ENCODE measurements at regions of chr11 and their contacts with region 1.

Region 1: DNA sequence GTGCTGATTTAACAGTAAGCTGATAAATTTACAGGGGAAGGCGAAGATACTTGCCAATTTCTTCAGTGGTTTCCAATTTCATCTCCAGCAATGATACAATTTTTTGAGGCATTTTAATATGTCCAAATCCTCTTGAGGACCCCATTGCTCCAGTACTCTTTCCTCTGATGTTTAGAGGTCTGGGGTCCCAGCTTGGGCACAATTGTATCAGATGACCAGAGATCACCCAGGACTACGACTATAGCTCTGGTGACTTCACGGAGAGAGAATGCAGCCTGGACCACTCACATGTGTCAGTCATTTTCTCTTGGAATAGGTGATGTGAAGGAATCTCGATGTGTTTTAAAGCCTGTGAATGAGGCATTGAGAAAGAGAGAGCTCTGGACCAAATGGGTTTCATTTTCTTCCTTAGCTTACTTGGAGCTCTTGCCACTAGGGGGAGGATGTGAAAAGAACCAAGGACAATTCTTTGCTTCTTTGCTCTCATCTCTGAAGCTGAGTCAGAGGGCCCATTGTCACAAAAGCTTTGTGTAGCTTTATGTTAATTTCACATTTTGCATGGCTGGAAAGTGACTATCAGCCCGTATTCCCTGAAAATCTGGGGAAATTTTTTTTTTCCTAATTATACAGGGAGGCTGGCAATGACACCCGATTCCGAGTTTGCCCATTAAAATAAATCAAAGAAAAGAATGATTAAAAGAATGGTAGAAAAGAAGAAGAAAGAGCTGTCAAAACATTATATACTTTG is 6.7 kb upstream of the CCDC90B start:
- DNase-seq: peak; percentile 39
- ATAC-seq: peak; percentile 86
- H3K4me3 ChIP-seq: no peak overlapping the region; a peak in 1 of 4 replicates
- H3K27ac ChIP-seq: no peak overlapping the region
- H3K4me1 ChIP-seq: 0 out of 4 replicates have a peak, but pooled peaks cover 0 to 3% of the 10 kb centered on the region in 2 experiments
- H3K27me3 ChIP-seq: peaks cover 11% of the 10 kb centered on the region
- CTCF ChIP-seq: peak; percentile 36 to 85 (median 75); a peak in 5 of 6 replicates
- POLR2A ChIP-seq: no peak
- RAD21 ChIP-seq: peak; percentile 45; the same call in 1 of the 2 replicates

Region 2: GRCh38 chr11:83306200-83307080 is 13.6 kb after region 1 on chr11:
- CTCF ChIA-PET with region 1: interaction called, 10 read pairs
- POLR2A ChIA-PET with region 1: no interaction called
- RAD21 ChIA-PET with region 1: no interaction called
- intact Hi-C with region 1: no loop called
- DNase-seq: no peak
- ATAC-seq: no peak
- H3K4me3 ChIP-seq: no peak overlapping the region
- H3K27ac ChIP-seq: no peak overlapping the region
- H3K4me1 ChIP-seq: no peaks in the 10 kb centered on the region
- H3K27me3 ChIP-seq: peaks cover 22% of the 10 kb centered on the region
- CTCF ChIP-seq: peak in 1 of 3 experiments; percentile 15; a peak in 1 of 6 replicates
- POLR2A ChIP-seq: no peak
- RAD21 ChIP-seq: no peak

Region 3: DNA sequence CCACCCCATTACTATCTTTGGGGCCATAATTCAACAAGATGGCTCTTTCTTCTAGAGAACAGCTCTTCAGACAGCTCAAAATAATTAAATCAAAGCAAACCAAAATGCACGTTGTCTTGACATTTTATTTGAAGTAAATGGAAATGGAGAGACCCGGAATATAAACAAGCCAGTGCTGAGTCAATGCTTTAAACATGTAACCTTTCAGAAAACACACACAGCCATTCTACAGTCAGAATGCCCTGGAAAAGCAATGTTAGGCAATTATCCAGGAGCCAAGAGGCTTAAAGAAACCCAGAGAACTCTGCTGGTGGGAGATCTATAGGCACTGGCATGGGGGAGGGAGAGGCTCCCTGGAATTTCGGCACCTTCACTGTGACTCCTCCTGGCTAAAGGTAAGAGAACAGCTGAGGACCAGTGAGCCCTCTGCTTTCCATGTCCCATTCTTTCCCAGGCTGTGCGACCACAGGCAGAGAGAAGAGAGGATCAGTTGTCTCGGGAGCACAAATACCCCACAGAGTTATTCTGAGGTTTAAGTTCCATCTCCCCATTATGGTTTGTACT is 247.3 kb after region 1 on chr11:
- CTCF ChIA-PET with region 1: no interaction called
- POLR2A ChIA-PET with region 1: no interaction called
- RAD21 ChIA-PET with region 1: no interaction called
- intact Hi-C with region 1: no loop called
- DNase-seq: no peak
- ATAC-seq: no peak
- H3K4me3 ChIP-seq: no peak overlapping the region
- H3K27ac ChIP-seq: no peak overlapping the region
- H3K4me1 ChIP-seq: no peaks in the 10 kb centered on the region
- H3K27me3 ChIP-seq: peaks cover 54% of the 10 kb centered on the region
- CTCF ChIP-seq: no peak
- POLR2A ChIP-seq: no peak
- RAD21 ChIP-seq: no peak

Region 4: DNA sequence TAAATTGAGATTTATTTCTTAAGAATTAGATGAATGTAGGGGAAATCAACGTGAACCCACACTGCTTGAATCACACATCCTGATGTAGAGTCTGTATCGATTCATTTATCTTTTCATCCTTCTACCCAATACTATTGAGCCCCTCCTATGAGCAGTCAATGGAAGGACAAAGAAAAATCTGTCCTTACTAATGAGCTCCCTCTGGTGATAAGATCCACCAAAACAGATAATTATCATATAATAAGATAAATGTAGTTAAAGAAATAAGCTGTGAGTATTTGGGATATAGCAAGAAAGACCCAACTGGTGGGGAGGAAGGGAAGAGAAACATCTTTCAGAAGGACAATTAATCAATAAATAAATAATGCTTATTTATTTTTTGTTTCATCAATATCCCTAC is 378.4 kb after region 1 on chr11:
- CTCF ChIA-PET with region 1: interaction called, 22 read pairs
- POLR2A ChIA-PET with region 1: no interaction called
- RAD21 ChIA-PET with region 1: no interaction called
- intact Hi-C with region 1: no loop called
- DNase-seq: no peak
- ATAC-seq: no peak
- H3K4me3 ChIP-seq: no peak overlapping the region
- H3K27ac ChIP-seq: no peak overlapping the region
- H3K4me1 ChIP-seq: no peaks in the 10 kb centered on the region
- H3K27me3 ChIP-seq: no peaks in the 10 kb centered on the region
- CTCF ChIP-seq: peak in 1 of 3 experiments; percentile 27; a peak in 1 of 6 replicates
- POLR2A ChIP-seq: no peak
- RAD21 ChIP-seq: peak; percentile 45

Region 5: DNA sequence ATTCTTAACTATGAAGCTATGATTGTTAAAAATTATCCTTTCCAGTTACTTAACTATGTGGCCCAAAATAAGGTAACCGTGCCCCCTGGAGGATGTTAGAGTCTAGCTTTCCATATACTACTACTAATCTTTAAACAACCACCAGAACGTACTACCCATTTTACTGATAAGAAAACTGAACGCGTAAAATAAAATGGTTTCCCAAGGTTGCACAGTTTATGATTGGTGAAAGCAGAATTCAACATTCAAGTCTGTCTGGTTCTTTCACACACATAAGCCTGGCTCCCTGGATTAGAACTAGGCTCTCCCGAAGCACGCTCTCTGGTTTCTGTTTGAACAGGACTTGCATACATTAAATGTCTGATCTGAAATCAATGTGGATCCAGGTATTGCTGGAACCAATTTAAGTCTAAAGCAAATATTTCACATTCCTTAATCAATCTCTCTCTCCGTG is 431.2 kb after region 1 on chr11:
- CTCF ChIA-PET with region 1: interaction called, 22 read pairs
- POLR2A ChIA-PET with region 1: no interaction called
- RAD21 ChIA-PET with region 1: interaction called in 1 of 2 experiments, 3 read pairs
- intact Hi-C with region 1: loop called (anchors 2 kb)
- DNase-seq: peak; percentile 23
- ATAC-seq: no peak
- H3K4me3 ChIP-seq: no peak overlapping the region
- H3K27ac ChIP-seq: no peak overlapping the region
- H3K4me1 ChIP-seq: no peaks in the 10 kb centered on the region
- H3K27me3 ChIP-seq: peaks cover 49% of the 10 kb centered on the region
- CTCF ChIP-seq: peak; percentile 26 to 37 (median 36); a peak in 4 of 6 replicates
- POLR2A ChIP-seq: no peak
- RAD21 ChIP-seq: peak; percentile 59

Measured in HCT116 (cell line).